GM18951 (cell line): ENCODE measurements at regions of chr3 and their contacts with region 1.

Region 1: GRCh38 chr3:87307803-87308202 is 31.4 kb upstream of the POU1F1 start:
- POLR2A ChIP-seq: no peak

Region 2: GRCh38 chr3:87997298-87997697 is 689.5 kb after region 1 on chr3:
- in situ Hi-C with region 1: loop called (anchors 25 kb)
- POLR2A ChIP-seq: no peak